CD8-positive, alpha-beta T cell (primary cell): ENCODE measurements at regions of chr17 and their contacts with region 1.

Region 1: DNA sequence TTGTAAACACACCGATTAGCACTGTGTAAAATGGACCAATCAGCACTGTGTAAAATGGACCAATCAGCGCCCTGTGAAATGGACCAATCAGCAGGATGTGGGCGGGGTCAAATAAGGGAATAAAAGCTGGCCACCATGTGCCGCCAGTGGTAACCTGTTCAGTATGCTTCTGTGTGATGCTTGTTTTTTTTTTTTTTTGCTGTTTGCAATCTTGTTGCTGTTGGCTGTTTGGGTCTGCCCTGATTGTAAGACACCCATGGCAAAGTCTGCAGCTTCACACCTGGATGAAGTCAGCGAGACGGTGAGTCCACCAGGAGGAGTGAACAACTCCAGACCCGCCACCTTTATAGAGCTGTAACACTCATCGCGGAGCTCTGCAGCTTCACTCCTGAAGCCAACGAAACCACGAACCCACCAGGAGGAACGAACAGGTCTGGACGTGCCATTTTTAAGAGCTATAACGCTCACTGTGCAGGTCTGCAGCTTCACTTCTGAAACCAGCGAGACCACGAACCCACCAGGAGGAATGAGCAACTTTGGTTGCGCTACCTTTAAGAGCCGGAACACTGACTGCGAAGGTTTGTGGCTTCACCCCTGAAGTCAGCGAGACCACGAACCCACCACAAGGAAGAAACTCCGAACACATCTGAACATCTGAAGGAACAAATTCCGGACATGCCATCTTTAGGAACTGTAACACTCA is 85.0 kb upstream of the MED9 start:
- DNase-seq: peak; percentile 37 to 87 (median 62)
- ATAC-seq: peak; percentile 82
- H3K4me3 ChIP-seq: peak overlapping the region; percentile 47 to 49
- H3K4me3 Mint-ChIP-seq: peak overlapping the region; percentile 83
- H3K27ac ChIP-seq: peak overlapping the region; percentile 34 to 41
- H3K27ac Mint-ChIP-seq: peak overlapping the region; percentile 88
- H3K4me1 ChIP-seq: peaks cover 24% of the 10 kb centered on the region
- H3K4me1 Mint-ChIP-seq: peaks cover 25% of the 10 kb centered on the region
- H3K27me3 ChIP-seq: no peaks in the 10 kb centered on the region
- H3K27me3 Mint-ChIP-seq: peaks cover 2% of the 10 kb centered on the region
- CTCF ChIP-seq: no peak

Region 2: GRCh38 chr17:17363638-17364337 is 28.0 kb before region 1 on chr17:
- CTCF ChIA-PET with region 1: no interaction called
- POLR2A ChIA-PET with region 1: no interaction called
- intact Hi-C with region 1: no loop called
- DNase-seq: peak in 3 of 9 experiments; percentile 63 to 82 (median 71)
- ATAC-seq: peak; percentile 89
- H3K4me3 ChIP-seq: no peak overlapping the region
- H3K4me3 Mint-ChIP-seq: no peak overlapping the region
- H3K27ac ChIP-seq: peak overlapping the region in 1 of 2 experiments; percentile 54
- H3K27ac Mint-ChIP-seq: peak overlapping the region; percentile 69
- H3K4me1 ChIP-seq: no peaks in the 10 kb centered on the region
- H3K4me1 Mint-ChIP-seq: peaks cover 9% of the 10 kb centered on the region
- H3K27me3 ChIP-seq: no peaks in the 10 kb centered on the region
- H3K27me3 Mint-ChIP-seq: peaks cover 3% of the 10 kb centered on the region
- CTCF ChIP-seq: no peak

Region 3: DNA sequence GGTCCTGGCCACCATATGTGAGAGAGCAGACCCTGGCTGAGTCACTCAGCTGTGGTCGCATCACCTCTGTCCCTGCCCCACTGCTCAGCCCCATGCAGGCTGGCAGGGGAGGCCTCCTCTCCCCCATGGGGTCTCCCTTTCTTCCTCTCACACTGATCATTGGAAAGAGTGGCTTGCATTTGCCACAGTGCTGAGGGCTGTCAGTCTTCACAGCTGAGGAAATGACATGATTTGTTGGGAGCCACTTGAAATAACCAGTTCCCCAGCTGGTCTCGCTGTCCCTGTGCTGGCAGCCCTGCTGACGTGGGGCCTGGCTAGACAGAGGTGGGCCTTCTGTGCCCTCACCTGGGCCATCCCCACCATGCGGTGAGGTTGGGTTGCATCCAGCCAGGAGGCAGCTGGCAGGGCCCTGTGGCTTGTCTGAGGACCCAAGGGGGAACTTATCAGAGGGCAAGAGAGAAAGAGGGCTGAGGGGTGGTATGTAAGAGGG is 54.9 kb after region 1 on chr17:
- CTCF ChIA-PET with region 1: no interaction called
- POLR2A ChIA-PET with region 1: no interaction called
- intact Hi-C with region 1: no loop called
- DNase-seq: no peak
- ATAC-seq: no peak
- H3K4me3 ChIP-seq: no peak overlapping the region
- H3K4me3 Mint-ChIP-seq: no peak overlapping the region
- H3K27ac ChIP-seq: no peak overlapping the region
- H3K27ac Mint-ChIP-seq: no peak overlapping the region
- H3K4me1 ChIP-seq: no peaks in the 10 kb centered on the region
- H3K4me1 Mint-ChIP-seq: no peaks in the 10 kb centered on the region
- H3K27me3 ChIP-seq: no peaks in the 10 kb centered on the region
- H3K27me3 Mint-ChIP-seq: no peaks in the 10 kb centered on the region
- CTCF ChIP-seq: no peak

Region 4: GRCh38 chr17:17476865-17477467 is 85.1 kb after region 1 on chr17 and contains the start of gene MED9:
- CTCF ChIA-PET with region 1: no interaction called
- POLR2A ChIA-PET with region 1: no interaction called
- intact Hi-C with region 1: loop called in 1 of 2 experiments (anchors 10 kb)
- DNase-seq: peak; percentile 87 to 97 (median 95)
- ATAC-seq: peak; percentile 100
- H3K4me3 ChIP-seq: peak within 1 kb of the TSS; percentile 88 to 96
- H3K4me3 Mint-ChIP-seq: peak within 1 kb of the TSS; percentile 89
- H3K27ac ChIP-seq: peak within 1 kb of the TSS; percentile 83 to 89
- H3K27ac Mint-ChIP-seq: peak within 1 kb of the TSS; percentile 89
- H3K4me1 ChIP-seq: peaks cover 32% of the 10 kb centered on the region
- H3K4me1 Mint-ChIP-seq: peaks cover 46% of the 10 kb centered on the region
- H3K27me3 ChIP-seq: no peaks in the 10 kb centered on the region
- H3K27me3 Mint-ChIP-seq: no peaks in the 10 kb centered on the region
- CTCF ChIP-seq: no peak
- total RNA-seq, gene MED9: 35.4 to 35.9 TPM

Region 5: GRCh38 chr17:17972126-17972951 is 580.5 kb after region 1 on chr17 and contains the starts of genes DRC3 and TOM1L2:
- CTCF ChIA-PET with region 1: no interaction called
- POLR2A ChIA-PET with region 1: no interaction called
- intact Hi-C with region 1: no loop called
- DNase-seq: peak; percentile 100
- ATAC-seq: peak; percentile 90
- H3K4me3 ChIP-seq: peak within 1 kb of the TSS; percentile 62 to 66
- H3K4me3 Mint-ChIP-seq: peak within 1 kb of the TSS; percentile 97
- H3K27ac ChIP-seq: peak within 1 kb of the TSS; percentile 77 to 85
- H3K27ac Mint-ChIP-seq: peak within 1 kb of the TSS; percentile 97
- H3K4me1 ChIP-seq: peaks cover 13% of the 10 kb centered on the region
- H3K4me1 Mint-ChIP-seq: peaks cover 39% of the 10 kb centered on the region
- H3K27me3 ChIP-seq: no peaks in the 10 kb centered on the region
- H3K27me3 Mint-ChIP-seq: no peaks in the 10 kb centered on the region
- CTCF ChIP-seq: no peak
- total RNA-seq, gene DRC3: 0.61 to 0.90 TPM
- total RNA-seq, gene TOM1L2: 15.4 to 20.9 TPM